Right ventricle myocardium inferior (tissue), 1 donor: ENCODE measurements at regions of chr18 and their contacts with region 1.

Region 1: GRCh38 chr18:9971313-9971920 is 57.6 kb downstream of the VAPA start:
- DNase-seq: no peak
- ATAC-seq: peak; percentile 69

Region 2: DNA sequence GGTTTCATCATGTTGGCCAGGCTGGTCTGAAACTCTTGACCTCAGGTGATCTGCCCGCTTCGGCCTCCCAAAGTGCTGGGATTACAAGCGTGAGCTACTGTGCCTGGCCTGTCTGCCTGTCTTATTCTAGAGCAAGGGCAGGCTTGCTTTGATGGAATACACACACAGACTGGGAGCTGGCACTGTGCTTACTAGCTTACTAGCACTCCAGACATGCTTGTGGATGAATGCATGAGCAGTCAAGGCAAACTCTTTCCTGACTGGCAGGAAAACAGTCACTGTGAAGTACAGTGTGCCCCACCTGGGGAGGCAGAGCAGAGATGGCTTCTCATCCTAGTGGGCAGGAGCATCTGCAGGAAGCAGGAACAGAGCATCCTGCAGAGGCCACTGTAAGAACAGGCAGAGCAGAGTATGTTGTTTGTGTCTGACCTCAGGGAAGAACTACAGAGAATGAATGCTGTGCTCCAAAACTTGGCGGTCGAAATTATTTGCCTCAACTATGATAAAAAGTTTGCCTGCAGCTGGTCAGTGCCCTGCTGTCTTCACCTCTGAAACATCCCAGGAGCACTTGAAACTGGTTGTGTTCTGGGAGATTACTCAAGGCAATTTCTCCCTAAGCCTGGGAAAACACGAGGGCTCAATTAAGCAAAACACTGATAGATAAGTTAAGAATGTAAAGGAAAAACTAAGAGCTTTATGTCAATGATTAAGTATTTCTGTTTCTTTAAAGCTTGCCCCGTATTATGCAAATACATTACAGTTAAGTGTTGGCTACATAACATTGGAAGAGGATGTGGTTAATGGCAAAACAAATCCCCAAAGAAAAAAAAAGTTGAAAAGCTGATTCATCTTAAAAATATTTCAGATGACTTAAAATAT is 44.8 kb after region 1 on chr18:
- intact Hi-C with region 1: no loop called
- DNase-seq: no peak
- ATAC-seq: peak; percentile 84

Region 3: GRCh38 chr18:10032331-10033015 is 61.1 kb after region 1 on chr18:
- intact Hi-C with region 1: loop called (anchors 10 kb)
- DNase-seq: no peak
- ATAC-seq: peak; percentile 41